Activated CD4-positive, alpha-beta memory T cell treated with anti-CD3 and anti-CD28 coated beads for 36 hours (primary cell): ENCODE measurements at regions of chr19 and their contacts with region 1.

Region 1: DNA sequence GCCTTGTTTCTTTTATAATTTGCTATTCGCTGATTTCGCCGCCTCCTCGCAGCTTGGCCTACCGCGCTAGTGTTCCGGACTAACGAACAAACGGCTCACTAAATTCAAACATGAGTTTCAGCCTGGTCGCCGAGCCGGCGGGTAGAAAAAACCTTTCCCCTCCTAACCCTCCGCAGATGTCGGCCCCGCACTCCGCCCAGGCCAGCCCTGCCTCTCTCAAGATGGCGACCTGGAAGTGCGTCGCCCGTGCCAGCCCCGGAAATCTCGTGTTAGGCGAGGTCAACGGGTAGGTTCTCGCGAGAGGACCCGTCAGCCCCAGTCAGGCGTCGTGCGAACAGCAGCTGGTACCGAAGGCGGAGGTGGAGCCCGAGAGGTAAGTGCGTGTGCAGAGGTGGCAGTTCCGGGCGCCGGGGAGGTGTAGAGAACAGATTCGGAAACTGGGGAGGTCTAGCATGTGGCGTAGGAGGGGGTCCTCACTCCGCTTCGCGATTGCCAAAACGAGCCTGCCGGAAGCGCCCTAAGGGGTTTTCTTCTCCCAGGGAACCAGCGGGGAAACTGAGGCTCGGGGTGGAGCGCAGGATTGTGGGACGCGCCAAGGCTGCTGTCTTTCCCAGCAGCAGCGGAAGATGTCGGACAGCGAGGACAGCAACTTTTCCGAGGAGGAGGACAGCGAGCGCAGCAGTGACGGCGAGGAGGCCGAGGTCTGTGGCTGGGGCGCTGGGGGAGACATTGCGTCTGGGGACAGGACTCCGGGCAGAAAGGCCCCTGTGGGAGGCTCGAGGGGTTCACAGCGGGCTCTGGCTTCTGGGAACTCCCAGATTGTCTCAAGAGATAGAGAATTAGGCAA is at the start of gene SUPT5H:
- DNase-seq: peak; percentile 99
- H3K4me3 Mint-ChIP-seq: peak within 1 kb of the TSS; percentile 98
- H3K27ac Mint-ChIP-seq: peak within 1 kb of the TSS; percentile 99
- H3K4me1 Mint-ChIP-seq: peaks cover 47% of the 10 kb centered on the region
- H3K27me3 Mint-ChIP-seq: no peaks in the 10 kb centered on the region
- total RNA-seq, gene SUPT5H: 180 to 183 TPM

Region 2: GRCh38 chr19:39297654-39298634 is 147.5 kb before region 1 on chr19:
- CTCF ChIA-PET with region 1: no interaction called
- POLR2A ChIA-PET with region 1: no interaction called
- intact Hi-C with region 1: no loop called
- DNase-seq: peak; percentile 78
- H3K4me3 Mint-ChIP-seq: no peak overlapping the region
- H3K27ac Mint-ChIP-seq: peak overlapping the region; percentile 16
- H3K4me1 Mint-ChIP-seq: peaks cover 17% of the 10 kb centered on the region
- H3K27me3 Mint-ChIP-seq: no peaks in the 10 kb centered on the region

Region 3: DNA sequence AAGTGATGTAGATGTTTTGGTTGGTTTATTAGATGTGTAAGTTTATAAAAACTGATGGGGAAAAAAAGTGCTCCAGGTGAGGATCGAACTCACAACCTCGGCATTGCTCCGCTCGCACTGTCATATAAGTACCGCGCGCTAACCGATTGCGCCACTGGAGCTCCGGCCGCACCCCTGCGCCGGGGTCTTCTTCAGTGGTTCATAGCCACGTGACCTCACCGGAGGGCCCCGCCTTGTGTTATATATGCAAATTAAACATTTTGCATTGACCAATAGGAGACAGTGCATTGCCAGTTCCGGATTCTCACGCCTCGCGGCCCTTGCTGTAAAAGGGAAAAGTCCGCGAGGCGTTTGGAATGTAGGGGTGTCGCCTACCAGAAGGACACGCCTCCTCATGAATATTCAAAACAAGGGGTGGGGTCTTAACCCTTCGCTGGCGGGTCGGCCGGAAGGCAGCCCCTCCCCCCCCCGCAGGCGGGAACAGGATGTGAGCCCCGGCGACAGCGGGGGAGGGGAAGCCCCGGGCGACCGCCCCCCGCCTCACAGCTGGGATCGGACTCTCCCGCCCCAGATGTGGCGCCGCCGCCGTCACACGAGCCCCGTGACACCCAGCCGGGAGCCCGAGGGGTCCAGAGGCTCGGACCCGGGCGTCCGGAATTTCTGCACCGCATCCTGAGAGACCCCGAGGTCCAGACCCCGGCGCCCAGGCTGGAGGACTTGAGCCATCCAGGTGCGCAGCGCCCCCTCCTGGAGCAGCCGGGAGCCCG is 33.2 kb before region 1 on chr19 and contains the start of gene PLEKHG2:
- CTCF ChIA-PET with region 1: interaction called, 8 read pairs
- POLR2A ChIA-PET with region 1: interaction called, 3 read pairs
- intact Hi-C with region 1: loop called (anchors 1 kb)
- DNase-seq: peak; percentile 98
- H3K4me3 Mint-ChIP-seq: peak within 1 kb of the TSS; percentile 84
- H3K27ac Mint-ChIP-seq: peak within 1 kb of the TSS; percentile 88
- H3K4me1 Mint-ChIP-seq: peaks cover 34% of the 10 kb centered on the region
- H3K27me3 Mint-ChIP-seq: peaks cover 3% of the 10 kb centered on the region
- total RNA-seq, gene PLEKHG2: 74.9 to 80.6 TPM

Region 4: DNA sequence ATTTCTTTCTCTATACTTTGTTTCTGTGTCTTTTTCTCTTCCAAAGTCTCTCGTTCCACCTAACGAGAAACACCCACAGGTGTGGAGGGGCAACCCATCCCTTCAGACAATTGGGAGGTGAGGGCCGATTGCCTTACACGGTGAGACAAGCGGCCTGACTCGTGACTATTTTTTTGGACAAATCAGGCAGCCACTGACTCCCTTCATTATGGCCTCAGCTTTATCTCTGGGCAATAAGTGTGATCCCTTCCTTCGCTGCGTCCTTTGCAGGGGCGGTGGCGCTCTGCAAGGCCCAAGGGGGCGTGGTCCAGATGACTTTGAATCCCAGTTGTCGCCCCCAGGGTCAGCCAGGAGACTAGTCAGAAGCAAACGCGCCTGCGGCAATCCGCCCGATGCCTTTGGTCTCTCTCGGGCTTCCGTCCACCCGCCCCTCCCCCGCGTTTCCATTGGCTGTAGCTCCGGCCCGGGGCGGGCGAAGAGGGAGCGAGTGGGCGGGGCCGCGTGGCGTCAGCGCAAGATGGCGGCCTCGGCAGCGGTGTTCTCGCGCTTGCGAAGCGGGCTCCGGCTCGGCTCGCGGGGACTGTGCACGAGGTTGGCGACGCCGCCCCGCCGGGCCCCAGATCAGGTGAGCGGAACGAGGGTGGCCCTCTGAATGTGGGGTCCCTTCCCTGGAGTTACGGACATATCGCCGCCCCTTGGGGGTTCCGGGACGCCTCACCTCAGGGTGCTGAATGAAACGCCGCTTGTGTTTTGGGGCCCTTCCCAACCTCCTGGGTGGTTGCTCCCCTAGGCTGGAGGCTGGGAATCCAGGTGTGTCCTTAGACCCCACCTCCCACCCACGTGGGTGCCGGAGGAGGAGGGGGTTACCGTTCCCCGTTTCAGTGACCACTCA is 35.1 kb after region 1 on chr19 and contains the start of gene TIMM50:
- CTCF ChIA-PET with region 1: interaction called, 25 read pairs
- POLR2A ChIA-PET with region 1: interaction called, 3 read pairs
- intact Hi-C with region 1: loop called (anchors 2 kb)
- DNase-seq: peak; percentile 98
- H3K4me3 Mint-ChIP-seq: peak within 1 kb of the TSS; percentile 82
- H3K27ac Mint-ChIP-seq: peak within 1 kb of the TSS; percentile 78
- H3K4me1 Mint-ChIP-seq: peaks cover 25% of the 10 kb centered on the region
- H3K27me3 Mint-ChIP-seq: no peaks in the 10 kb centered on the region
- total RNA-seq, gene TIMM50: 83.1 to 86.7 TPM

Region 5: DNA sequence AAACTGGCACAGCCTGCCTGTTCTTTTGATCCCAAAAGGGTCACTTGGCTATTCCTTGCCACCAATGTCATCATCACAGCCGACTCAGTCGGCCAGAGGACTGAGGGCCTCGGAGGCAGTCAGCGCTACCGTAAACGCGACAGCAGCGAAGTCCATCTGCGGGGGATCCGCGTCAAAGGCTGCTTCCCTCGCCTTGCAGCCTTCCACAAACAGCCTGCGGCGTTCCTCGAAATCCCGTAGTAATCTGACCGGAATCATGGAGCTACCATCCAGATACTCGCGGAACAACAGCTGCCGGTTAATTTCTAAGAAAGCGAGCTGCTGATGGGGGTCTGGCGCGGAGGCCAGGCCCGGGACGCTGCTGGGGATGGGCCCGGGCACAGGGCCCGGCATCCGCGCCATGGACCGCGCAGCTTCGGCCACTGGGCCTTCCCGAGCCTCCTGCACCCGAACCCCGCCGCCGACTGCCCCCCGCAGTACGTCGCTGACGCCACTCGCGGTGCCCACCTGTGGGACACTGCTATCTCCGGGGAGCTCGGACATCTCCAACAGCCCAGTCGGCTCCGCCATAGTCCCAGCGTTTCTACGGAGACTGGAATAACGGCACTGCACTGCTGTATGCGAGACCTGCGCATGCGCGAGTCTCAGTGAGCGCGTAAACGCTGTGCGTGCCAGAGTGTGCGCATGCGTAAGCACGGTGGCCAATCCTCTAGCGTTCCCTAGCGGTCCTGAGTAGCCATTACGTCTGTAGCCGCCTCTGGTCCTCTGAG is 86.9 kb after region 1 on chr19 and contains the start of gene EID2B:
- CTCF ChIA-PET with region 1: interaction called, 53 read pairs
- POLR2A ChIA-PET with region 1: interaction called, 3 read pairs
- intact Hi-C with region 1: loop called (anchors 1 kb)
- DNase-seq: peak; percentile 96
- H3K4me3 Mint-ChIP-seq: peak within 1 kb of the TSS; percentile 91
- H3K27ac Mint-ChIP-seq: peak within 1 kb of the TSS; percentile 65
- H3K4me1 Mint-ChIP-seq: peaks cover 20% of the 10 kb centered on the region
- H3K27me3 Mint-ChIP-seq: no peaks in the 10 kb centered on the region
- total RNA-seq, gene EID2B: 3.3 to 3.8 TPM

Region 6: DNA sequence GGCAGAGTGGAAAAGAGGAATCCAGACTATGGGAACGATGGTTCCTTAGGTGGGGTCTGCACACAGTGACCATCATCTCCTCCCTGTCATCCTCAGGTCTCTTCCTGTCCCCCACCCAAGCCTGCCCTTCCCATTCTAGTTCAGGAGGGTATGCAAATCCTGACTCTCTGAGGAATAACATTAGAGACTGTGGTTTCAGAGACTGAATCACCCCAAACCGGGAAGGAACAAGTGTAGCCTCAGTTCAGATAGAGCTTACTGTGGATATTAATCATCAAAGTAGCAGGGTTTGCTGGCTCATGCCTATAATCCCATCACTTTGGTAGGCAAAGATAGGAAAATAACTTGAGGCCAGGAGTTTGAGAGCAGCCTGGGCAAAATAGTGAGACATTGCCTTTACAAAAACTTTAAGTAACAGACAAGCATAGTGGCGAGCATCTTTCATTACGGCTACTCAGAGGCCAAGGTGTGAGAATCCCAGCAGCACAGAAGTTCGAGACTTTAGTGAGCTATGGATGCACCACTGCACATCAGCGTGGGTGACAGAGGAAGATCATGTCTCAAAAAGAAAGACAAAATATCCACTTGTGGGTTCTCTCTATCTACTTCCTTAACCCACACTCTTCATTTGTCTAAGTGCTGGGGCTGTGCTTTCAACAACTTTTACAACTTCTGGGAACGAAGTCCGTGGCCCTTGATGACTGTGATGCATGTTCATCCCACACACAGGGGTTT is 137.6 kb after region 1 on chr19:
- CTCF ChIA-PET with region 1: interaction called, 3 read pairs
- POLR2A ChIA-PET with region 1: interaction called, 3 read pairs
- intact Hi-C with region 1: loop called (anchors 1 kb)
- DNase-seq: peak; percentile 52
- H3K4me3 Mint-ChIP-seq: no peak overlapping the region
- H3K27ac Mint-ChIP-seq: no peak overlapping the region
- H3K4me1 Mint-ChIP-seq: no peaks in the 10 kb centered on the region
- H3K27me3 Mint-ChIP-seq: peaks cover 39% of the 10 kb centered on the region